ENCODE measurements at regions of chr11 and their contacts with region 1.

Region 1: DNA sequence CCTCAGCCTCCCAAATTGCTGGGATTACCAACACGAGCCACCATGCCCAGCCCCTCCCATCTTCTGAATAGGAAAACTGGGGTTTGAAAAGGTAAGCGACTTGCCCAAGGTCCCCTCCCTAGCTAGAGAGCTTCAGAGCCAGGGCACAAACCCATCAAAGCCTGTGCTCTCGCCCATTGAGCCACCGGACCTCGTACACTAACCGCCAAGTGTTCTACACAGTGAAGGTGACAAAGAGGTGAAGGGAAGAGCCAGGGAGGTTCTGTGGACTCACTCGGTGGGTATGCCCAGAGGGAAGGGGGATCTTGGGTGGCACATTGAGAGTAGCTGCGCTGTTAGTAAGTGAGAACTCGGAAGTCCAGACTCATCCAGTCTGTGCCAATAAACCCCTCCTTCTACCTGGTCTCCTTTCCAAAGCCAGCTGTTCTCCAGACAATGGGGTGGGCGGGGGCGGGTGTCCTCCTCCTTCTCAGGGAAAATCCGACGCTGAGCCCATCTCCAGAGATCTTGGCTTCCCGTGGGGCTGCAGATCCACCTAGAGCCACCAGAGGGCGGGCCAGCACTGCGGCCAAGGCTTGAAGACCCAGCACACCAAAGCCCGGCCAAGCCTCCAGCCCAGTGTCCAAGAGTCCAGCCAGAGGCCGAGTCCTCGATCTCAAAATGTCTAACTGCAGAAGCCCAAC is 3.2 kb upstream of the RTN4RL2 start:
- DNase-seq: peak; percentile 85
- H3K4me3 Mint-ChIP-seq: peak overlapping the region; percentile 56
- H3K27ac Mint-ChIP-seq: no peak overlapping the region
- H3K4me1 Mint-ChIP-seq: peaks cover 25% of the 10 kb centered on the region
- H3K27me3 Mint-ChIP-seq: peaks cover 27% of the 10 kb centered on the region

Region 2: GRCh38 chr11:56841210-56841810 is 615.8 kb before region 1 on chr11:
- CTCF ChIA-PET with region 1: no interaction called
- intact Hi-C with region 1: loop called (anchors 5 kb)
- DNase-seq: peak; percentile 59
- H3K4me3 Mint-ChIP-seq: no peak overlapping the region
- H3K27ac Mint-ChIP-seq: no peak overlapping the region
- H3K4me1 Mint-ChIP-seq: no peaks in the 10 kb centered on the region
- H3K27me3 Mint-ChIP-seq: peaks cover 14% of the 10 kb centered on the region

Region 3: GRCh38 chr11:57269571-57270021 is 187.5 kb before region 1 on chr11:
- CTCF ChIA-PET with region 1: no interaction called
- intact Hi-C with region 1: no loop called
- DNase-seq: no peak
- H3K4me3 Mint-ChIP-seq: no peak overlapping the region
- H3K27ac Mint-ChIP-seq: no peak overlapping the region
- H3K4me1 Mint-ChIP-seq: no peaks in the 10 kb centered on the region
- H3K27me3 Mint-ChIP-seq: peaks cover 8% of the 10 kb centered on the region

Region 4: DNA sequence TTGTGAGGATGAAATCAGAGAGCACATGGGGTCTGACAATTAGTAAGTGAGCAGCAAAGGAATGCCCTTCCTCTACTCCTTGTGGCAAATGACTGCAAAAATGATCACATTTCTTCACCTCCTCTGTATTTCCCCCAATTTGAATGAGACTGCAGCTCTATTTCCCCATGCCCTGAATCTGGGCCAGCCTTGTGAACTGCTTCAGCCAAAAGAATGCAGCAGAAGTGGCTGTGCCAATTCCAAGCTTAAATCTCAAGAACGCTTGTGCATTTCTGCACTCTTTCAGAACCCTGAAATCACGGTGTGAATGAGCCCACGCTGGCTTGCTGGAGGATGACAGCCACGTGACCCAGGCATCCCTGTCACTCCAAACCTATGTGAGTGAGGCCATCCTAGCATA is 40.0 kb before region 1 on chr11:
- CTCF ChIA-PET with region 1: interaction called, 11 read pairs
- intact Hi-C with region 1: no loop called
- DNase-seq: no peak
- H3K4me3 Mint-ChIP-seq: no peak overlapping the region
- H3K27ac Mint-ChIP-seq: no peak overlapping the region
- H3K4me1 Mint-ChIP-seq: peaks cover 81% of the 10 kb centered on the region
- H3K27me3 Mint-ChIP-seq: no peaks in the 10 kb centered on the region

Region 5: GRCh38 chr11:57444362-57445121 is 12.6 kb before region 1 on chr11:
- CTCF ChIA-PET with region 1: interaction called, 15 read pairs
- intact Hi-C with region 1: no loop called
- DNase-seq: no peak
- H3K4me3 Mint-ChIP-seq: no peak overlapping the region
- H3K27ac Mint-ChIP-seq: no peak overlapping the region
- H3K4me1 Mint-ChIP-seq: no peaks in the 10 kb centered on the region
- H3K27me3 Mint-ChIP-seq: peaks cover 5% of the 10 kb centered on the region

Region 6: DNA sequence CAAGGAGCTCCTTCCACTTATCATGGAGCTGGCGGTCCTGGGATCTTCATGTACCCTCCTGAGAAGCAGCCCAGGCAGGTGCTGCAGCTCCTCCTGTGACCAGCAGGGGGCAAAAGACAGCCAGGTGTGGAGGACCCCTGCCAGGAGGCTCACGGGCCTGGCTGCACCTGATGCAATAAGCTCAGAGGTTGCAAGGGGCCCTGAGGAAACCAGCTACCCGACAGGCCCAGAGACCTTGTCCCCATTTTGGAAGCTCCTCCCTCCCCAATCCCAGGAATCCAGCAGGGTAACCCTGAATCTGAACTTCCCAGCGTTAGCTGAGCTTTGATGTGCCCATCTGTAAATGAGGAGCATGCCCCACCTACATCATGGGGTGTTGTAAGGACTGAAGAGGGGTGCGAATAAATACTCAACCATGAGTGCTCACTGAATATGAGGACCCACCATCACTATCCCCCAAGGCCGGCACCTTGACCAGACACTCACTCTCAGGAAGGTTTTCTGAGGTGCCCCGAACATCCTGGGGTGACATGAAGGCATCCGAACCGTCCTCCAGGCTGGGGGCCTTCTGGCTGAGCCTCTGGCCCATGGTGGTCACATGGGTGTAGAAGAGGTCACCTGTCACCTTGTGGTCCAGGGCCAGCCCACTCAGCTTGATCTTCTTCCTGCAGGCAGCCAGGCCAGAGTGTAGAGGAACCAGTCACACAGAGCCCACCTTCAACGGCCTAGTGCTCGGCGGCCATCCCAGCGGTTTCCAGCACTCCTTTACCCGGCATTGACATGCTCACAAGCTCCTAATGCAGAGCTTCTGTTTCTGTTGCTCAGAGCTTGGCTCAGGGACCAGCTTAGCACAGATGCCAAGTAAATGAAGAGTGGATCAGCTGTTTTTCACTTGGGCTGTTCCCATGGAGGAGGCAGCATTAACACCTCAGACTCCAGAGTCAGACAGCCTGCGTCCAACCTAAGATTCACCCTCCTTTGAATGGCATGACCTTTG is 36.7 kb after region 1 on chr11:
- CTCF ChIA-PET with region 1: interaction called, 53 read pairs
- intact Hi-C with region 1: loop called (anchors 5 kb)
- DNase-seq: peak; percentile 93
- H3K4me3 Mint-ChIP-seq: no peak overlapping the region
- H3K27ac Mint-ChIP-seq: peak overlapping the region; percentile 93
- H3K4me1 Mint-ChIP-seq: peaks cover 12% of the 10 kb centered on the region
- H3K27me3 Mint-ChIP-seq: no peaks in the 10 kb centered on the region

Region 7: GRCh38 chr11:57539342-57539741 is 82.2 kb after region 1 on chr11:
- CTCF ChIA-PET with region 1: no interaction called
- intact Hi-C with region 1: no loop called
- DNase-seq: no peak
- H3K4me3 Mint-ChIP-seq: no peak overlapping the region
- H3K27ac Mint-ChIP-seq: no peak overlapping the region
- H3K4me1 Mint-ChIP-seq: no peaks in the 10 kb centered on the region
- H3K27me3 Mint-ChIP-seq: no peaks in the 10 kb centered on the region

Region 8: DNA sequence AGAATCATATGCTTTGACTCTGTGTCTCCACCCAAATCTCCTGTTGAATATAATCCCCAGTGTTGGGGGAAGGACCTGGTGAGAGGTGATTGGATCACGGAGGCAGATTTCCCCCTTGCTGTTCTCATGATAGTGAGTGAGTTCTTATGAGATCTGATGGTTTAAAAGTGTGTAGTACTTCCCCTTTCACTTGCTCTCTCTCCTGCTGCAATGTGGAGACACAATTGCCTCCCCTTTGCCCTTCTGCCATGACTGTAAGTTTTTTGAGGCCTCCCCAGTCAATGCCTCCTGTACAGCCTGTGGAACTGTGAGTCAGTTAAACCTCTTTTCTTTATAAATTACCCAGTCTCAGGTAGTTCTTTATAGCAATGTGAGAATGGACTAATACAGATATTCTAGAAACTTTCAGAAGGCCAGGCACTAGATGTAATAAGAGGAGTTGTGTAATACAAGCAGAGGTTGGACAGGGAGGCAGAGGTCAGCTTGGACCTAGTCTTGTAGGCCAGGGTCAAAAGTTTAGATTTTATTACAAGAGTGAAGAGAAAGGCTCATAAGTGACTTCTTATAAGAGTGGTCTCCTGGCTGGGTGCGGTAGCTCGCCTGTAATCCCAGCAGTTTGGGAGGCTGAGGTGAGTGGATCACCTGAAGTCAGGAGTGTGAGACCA is 131.1 kb after region 1 on chr11:
- CTCF ChIA-PET with region 1: no interaction called
- intact Hi-C with region 1: no loop called
- DNase-seq: no peak
- H3K4me3 Mint-ChIP-seq: no peak overlapping the region
- H3K27ac Mint-ChIP-seq: no peak overlapping the region
- H3K4me1 Mint-ChIP-seq: no peaks in the 10 kb centered on the region
- H3K27me3 Mint-ChIP-seq: no peaks in the 10 kb centered on the region

Region 9: GRCh38 chr11:57644748-57645688 is 187.9 kb after region 1 on chr11:
- CTCF ChIA-PET with region 1: interaction called, 69 read pairs
- intact Hi-C with region 1: loop called (anchors 1 kb)
- DNase-seq: peak; percentile 94
- H3K4me3 Mint-ChIP-seq: no peak overlapping the region
- H3K27ac Mint-ChIP-seq: no peak overlapping the region
- H3K4me1 Mint-ChIP-seq: peaks cover 35% of the 10 kb centered on the region
- H3K27me3 Mint-ChIP-seq: peaks cover 39% of the 10 kb centered on the region

Measured in activated naive CD4-positive, alpha-beta T cell treated with anti-CD3 and anti-CD28 coated beads for 36 hours (primary cell).